ENCODE measurements at regions of chr11 and their contacts with region 1.

Region 1: DNA sequence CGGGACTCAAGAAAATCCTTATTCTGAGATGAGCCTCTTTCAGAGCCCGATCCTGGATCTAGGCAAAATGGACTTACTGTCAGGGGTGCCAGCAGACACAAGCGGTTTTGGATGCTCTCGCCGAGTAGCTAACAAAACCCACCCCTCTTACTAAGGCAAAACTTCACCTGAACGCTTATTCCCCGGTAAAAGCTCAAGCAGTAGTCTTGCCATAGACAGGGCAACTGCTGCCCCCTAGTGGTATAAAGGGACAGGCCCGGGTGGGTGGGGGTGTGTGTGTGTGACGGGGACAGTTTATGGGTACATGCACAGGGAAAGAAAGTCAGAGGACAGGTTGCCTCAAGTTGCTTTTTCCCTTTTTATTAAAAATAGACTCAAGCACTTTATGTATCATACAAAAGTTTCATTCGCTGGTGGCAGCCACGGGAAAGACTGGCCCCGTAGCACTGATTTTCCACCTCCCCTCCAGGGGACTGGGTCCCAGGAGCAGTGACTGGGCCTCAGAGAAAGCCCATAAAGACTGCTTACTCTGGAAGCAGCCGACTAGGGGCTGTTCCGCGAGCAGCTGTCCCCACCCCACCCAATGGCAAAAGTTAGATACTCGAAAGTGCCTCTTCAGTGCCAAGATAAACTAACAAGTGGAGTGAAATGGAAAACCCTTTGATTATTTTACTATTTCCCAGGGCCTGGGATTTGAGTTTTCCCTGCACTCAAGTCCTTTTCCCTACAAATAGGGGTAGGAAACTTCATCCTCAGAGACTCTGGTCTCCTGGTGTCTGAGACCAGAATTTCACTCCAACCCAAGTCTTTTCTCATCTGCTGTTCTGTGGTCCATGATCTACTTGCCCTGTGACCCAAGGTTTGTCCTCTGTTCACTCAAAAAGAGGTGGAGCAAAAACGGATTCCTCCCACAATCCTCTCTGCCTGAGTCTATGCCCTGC is 4.7 kb downstream of the YPEL4 start:
- DNase-seq: peak; percentile 75
- ATAC-seq: peak; percentile 72 to 76

Region 2: DNA sequence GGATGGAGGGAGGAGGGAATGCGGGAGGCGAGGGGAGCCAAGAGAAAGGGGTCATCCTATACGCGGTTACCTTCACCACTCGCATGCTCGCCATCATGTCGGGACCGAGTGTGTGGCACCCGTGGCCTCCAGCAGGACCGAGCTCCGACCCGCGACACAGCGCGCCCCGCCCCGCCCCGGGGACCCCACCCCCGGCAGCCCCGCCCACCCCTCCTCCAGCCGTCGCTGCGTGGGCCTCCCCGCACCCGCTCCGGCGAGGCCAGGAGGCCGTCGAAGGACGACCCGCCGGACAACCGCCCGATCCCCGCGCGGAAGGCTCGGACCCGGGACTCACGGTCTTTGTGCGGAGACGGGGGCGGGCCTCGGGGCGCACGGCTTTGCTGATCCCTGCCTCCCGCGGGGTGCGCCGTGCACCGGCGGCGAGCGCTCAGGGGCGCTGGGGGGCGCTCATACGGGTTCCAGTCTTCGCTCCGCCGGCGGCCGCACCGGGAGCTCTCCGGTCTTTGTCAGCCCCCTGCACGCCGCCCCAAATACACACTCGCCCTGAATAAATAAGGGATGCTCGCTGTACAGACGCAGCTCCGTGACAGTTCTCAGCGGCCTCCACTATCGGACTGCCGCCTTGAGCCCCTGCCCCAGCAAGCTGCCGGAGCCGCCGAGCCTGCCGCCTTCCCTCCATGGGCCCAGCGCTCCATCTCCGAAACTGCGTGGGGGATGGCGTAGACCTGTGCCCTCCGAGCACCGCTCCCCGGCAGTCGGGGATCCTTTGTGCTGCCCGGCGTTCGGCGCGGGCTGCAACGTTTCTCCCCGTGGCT is 77.3 kb before region 1 on chr11 and contains the start of gene UBE2L6:
- intact Hi-C with region 1: loop called (anchors 2 to 5 kb)
- DNase-seq: peak; percentile 89
- ATAC-seq: peak; percentile 87 to 89
- total RNA-seq, gene UBE2L6: 28.9 to 30.0 TPM

Region 3: GRCh38 chr11:57630193-57630592 is 14.8 kb before region 1 on chr11:
- intact Hi-C with region 1: no loop called
- DNase-seq: no peak
- ATAC-seq: no peak

Region 4: GRCh38 chr11:57873196-57873911 is 228.3 kb after region 1 on chr11:
- intact Hi-C with region 1: no loop called
- DNase-seq: no peak
- ATAC-seq: no peak

Region 5: DNA sequence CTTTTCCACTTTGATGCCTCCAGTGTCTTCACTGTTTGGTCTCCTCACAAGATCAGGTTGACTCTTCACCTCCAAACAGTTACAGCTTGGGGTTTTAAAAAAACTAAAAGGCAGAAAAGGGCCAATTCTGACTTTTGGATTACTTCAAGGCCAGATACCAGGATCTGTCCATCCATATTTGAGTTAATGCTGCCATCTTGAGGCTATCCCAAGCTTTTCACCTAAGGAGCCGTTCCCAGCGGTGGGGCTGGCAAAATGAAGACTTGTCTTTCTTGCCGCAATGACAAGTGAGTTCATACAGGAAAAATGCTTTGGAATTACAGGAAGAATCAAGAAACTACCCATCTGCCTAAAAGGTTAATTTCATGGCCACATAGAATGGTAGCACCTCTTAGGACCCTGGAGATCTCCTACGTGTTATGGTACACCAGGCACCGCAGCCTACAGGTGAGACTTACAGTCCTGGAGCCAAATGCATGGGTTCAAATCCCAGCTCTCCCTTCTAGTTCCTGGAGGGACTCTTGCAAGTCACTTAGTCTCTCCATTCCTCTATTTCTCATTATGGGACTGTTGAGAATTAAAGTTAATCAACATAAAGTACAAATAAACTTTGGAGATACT is 868.8 kb after region 1 on chr11:
- intact Hi-C with region 1: loop called in 1 of 2 experiments (anchors 10 kb)
- DNase-seq: peak; percentile 19
- ATAC-seq: peak; percentile 80 to 81

Measured in left cardiac atrium (tissue), 4 donors.